Esophagus squamous epithelium (tissue), 5 donors: ENCODE measurements at regions of chr7 and their contacts with region 1.

Region 1: DNA sequence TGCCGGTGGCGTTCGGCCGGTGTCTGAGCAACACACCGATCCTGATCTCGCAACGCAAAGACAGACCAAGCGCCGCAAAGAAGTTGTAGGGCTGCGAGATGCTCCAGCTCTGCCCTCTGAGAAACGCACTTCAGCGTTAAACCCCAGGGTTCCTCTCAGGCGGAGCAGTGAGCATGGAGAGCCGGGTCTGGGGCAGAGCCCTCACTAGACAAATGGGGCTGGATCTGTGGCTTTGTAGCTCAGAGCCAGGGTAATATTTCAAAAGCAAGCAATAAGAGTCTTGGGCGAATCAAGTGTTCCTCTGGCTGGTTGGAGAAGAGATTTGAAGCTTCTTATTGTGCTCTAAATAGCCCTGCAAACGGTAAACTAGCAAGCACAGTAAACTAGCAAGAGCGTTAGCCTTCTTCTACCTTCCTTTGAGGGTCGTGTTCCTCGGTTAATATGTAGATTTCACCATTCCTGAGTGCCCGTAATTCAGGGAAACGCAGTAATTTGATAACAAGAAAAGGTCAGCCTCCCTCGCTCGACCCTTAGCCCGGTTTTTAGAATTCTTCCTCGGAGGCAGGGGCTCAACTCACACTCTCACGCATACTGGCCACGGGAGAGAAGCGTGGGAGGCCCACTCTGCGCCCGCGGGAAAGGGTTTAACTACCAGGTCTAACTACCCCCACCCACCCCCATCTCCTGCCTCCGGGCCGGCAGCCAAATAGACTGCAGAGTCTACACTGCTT is 6.7 kb downstream of the SKAP2 start:
- DNase-seq: no peak
- H3K4me3 ChIP-seq: peak overlapping the region; percentile 14 to 55 (median 42)
- H3K27ac ChIP-seq: peak overlapping the region; percentile 75 to 99 (median 90)
- H3K4me1 ChIP-seq: peaks cover 0 to 80% (median 4%) of the 10 kb centered on the region in 3 donors
- H3K27me3 ChIP-seq: peaks cover 0 to 52% (median 0%) of the 10 kb centered on the region in 4 donors
- CTCF ChIP-seq: no peak
- POLR2A ChIP-seq: no peak

Region 2: DNA sequence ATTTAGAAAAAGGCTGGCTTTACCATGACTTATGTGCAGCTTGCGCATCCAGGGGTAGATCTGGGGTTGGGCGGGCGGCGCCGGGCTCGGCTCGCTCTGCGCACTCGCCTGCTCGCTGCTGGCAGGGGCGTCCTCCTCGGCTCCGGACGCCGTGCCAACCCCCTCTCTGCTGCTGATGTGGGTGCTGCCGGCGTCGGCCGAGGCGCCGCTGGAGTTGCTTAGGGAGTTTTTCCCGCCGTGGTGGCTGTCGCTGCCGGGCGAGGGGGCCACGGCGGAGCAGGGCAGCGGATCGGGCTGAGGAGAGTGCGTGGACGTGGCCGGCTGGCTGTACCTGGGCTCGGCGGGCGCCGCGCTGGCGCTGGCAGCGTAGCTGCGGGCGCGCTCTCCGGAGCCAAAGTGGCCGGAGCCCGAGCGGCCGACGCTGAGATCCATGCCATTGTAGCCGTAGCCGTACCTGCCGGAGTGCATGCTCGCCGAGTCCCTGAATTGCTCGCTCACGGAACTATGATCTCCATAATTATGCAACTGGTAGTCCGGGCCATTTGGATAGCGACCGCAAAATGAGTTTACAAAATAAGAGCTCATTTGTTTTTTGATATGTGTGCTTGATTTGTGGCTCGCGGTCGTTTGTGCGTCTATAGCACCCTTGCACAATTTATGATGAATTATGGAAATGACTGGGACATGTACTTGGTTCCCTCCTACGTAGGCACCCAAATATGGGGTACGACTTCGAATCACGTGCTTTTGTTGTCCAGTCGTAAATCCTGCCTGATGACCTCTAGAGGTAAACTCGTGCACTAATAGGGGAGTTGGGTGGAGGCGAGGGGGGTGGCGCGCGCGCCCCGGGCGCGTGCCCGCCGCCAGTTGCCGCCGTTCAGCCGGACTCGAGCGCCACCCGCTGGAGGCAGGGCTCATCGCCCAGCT is 285.6 kb after region 1 on chr7 and contains the start of gene HOXA5:
- intact Hi-C with region 1: loop called (anchors 5 kb)
- DNase-seq: no peak
- H3K4me3 ChIP-seq: peak within 1 kb of the TSS; percentile 65 to 89 (median 74)
- H3K27ac ChIP-seq: peak within 1 kb of the TSS; percentile 92 to 97 (median 92)
- H3K4me1 ChIP-seq: peaks cover 5 to 59% (median 8%) of the 10 kb centered on the region in 3 donors
- H3K27me3 ChIP-seq: peaks cover 0 to 88% (median 2%) of the 10 kb centered on the region in 4 donors
- CTCF ChIP-seq: peak; percentile 74 to 98 (median 92)
- POLR2A ChIP-seq: peak in 3 of 4 donors; percentile 81 to 89 (median 82)
- total RNA-seq, gene HOXA5: 3.6 to 8.2 (median 6.8) TPM